ENCODE measurements at regions of chr11 and their contacts with region 1.

Region 1: GRCh38 chr11:72793425-72794367 is at the start of gene STARD10:
- DNase-seq: peak; percentile 79
- ATAC-seq: peak; percentile 98
- H3K4me3 ChIP-seq: peak within 1 kb of the TSS; percentile 66
- H3K27ac ChIP-seq: peak within 1 kb of the TSS; percentile 77
- H3K4me1 ChIP-seq: peaks cover 11% of the 10 kb centered on the region
- H3K27me3 ChIP-seq: no peaks in the 10 kb centered on the region
- CTCF ChIP-seq: peak; percentile 84 to 95 (median 95)
- EP300 ChIP-seq: no peak
- POLR2A ChIP-seq: peak; percentile 81
- RAD21 ChIP-seq: peak; percentile 58
- polyA plus RNA-seq, gene STARD10: 0.15 to 0.21 TPM

Region 2: DNA sequence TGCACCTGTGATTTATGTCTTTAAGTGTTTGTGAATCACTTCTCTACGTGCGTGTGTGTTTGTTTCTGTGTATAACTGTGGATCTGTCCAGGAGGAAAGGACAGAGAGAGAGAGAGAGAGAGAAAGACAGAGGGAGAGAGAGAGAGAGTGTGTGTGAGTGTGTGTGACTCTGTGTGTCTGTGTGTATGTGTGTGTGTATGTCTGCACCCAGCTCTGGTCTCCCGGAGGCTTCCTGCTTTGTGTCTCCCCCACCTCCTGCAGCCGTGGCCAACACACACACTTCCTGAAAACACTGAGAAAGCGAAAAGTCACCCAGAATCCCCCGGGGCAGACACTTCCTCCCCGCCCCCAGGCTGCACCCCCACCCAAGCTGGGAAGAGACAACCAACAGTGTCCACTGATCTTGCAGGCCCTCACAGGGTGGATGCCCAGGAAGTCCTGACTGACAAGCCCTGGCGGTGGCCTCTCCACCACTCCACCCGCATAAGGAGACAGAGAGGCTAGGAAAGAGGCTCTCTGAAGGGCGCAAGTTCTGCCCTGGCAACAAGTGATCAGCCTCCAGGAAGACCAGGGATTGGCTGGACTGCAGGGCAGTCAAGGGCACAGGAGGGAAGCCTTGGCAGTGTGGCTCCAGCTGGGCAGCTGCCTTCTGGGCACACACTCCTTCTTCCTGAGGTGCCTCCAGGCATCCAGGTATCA is 71.5 kb before region 1 on chr11:
- CTCF ChIA-PET with region 1: interaction called, 469 read pairs
- POLR2A ChIA-PET with region 1: interaction called, 12 read pairs
- RAD21 ChIA-PET with region 1: interaction called, 256 read pairs
- SMC1A ChIA-PET with region 1: interaction called, 185 read pairs
- in situ Hi-C with region 1: loop called (anchors 10 kb)
- intact Hi-C with region 1: loop called (anchors 1 kb)
- DNase-seq: no peak
- ATAC-seq: peak; percentile 93
- H3K4me3 ChIP-seq: peak overlapping the region; percentile 85
- H3K27ac ChIP-seq: peak overlapping the region; percentile 92
- H3K4me1 ChIP-seq: peaks cover 49% of the 10 kb centered on the region
- H3K27me3 ChIP-seq: no peaks in the 10 kb centered on the region
- CTCF ChIP-seq: no peak
- EP300 ChIP-seq: no peak
- POLR2A ChIP-seq: peak; percentile 72
- RAD21 ChIP-seq: no peak

Region 3: DNA sequence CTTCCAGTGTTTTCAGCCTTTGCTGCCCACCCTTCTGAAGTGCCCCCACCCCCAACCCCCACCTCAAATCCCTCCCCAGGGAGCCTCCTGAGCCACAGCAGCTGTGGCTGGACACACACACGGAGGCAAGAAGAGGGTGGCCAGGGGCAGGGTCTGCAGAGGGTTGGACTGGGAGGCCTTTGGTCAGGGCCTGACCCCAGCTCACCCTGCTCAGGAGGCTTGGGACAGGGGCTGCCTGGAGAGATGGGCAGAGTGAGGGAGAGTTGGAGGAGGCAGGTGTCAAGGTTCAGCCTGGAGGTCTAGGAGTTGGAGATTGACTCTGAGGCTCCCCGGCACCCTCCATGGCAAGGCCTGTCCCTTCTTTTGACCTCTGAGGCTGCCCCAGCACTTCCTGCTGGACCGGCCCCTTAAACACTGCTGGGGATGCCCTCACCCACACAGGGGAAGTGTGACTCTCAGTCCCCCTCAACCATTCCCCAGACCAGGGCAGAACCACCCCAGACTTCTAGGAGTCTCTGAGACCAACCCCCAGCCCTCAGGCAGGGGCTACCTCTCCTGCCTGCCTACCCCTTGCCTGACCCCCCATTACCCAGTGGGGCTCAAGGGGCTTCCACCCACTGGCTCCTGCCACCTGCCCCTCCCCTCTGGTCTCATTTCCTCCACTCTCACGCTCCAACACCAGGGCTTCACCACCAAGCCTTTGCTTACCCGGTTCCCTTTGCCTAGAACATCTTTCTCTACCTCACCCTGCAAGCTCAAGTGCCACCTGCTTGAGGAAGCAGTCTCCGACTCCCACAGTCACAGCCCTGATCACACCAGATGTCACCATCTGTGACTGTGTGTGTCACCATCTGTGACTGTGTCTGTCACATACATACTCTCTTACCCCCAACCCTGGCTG is 50.1 kb before region 1 on chr11:
- CTCF ChIA-PET with region 1: interaction called, 65 read pairs
- POLR2A ChIA-PET with region 1: interaction called, 40 read pairs
- RAD21 ChIA-PET with region 1: interaction called, 55 read pairs
- SMC1A ChIA-PET with region 1: interaction called, 38 read pairs
- in situ Hi-C with region 1: no loop called
- intact Hi-C with region 1: loop called (anchors 5 kb)
- DNase-seq: no peak
- ATAC-seq: peak; percentile 53
- H3K4me3 ChIP-seq: peak overlapping the region; percentile 51; the same call in 1 of the 2 replicates
- H3K27ac ChIP-seq: peak overlapping the region; percentile 59
- H3K4me1 ChIP-seq: peaks cover 75% of the 10 kb centered on the region
- H3K27me3 ChIP-seq: no peaks in the 10 kb centered on the region
- CTCF ChIP-seq: no peak
- EP300 ChIP-seq: no peak
- POLR2A ChIP-seq: no peak
- RAD21 ChIP-seq: no peak

Region 4: DNA sequence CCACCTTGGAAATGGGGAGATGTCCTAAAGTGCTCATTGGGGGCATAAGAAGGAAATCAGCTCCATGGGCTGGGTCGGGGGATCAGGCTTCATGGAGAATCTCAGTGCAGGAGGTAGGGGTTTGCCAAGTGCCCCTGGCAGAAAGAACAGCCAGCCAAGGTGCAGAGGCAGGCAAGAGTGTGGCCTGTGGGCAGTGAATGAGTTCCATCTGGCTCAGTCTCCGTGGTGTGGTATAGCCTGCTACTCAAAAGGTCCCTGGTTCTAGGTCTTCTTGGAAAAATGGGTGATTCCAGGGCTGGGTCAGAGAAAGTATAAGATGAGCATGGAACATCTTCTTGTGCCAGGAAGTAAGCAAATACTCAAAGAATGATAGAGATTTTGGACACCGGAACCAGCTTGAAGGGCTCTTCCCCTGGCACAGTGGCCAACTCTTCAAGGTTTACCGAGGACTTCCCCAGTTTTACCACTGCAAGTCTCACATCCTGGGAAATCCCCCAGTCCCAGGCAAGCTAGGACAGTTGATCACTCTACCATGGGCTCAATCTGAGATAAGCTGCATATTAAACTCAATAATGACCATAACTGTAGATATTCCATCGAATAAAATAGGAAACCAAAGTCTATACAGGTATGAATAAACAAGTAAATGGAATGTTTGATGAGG is 30.9 kb before region 1 on chr11:
- CTCF ChIA-PET with region 1: interaction called, 18 read pairs
- POLR2A ChIA-PET with region 1: interaction called, 5 read pairs
- RAD21 ChIA-PET with region 1: interaction called, 7 read pairs
- SMC1A ChIA-PET with region 1: interaction called, 7 read pairs
- in situ Hi-C with region 1: no loop called
- intact Hi-C with region 1: no loop called
- DNase-seq: no peak
- ATAC-seq: peak; percentile 98
- H3K4me3 ChIP-seq: no peak overlapping the region
- H3K27ac ChIP-seq: peak overlapping the region; percentile 64
- H3K4me1 ChIP-seq: peaks cover 25% of the 10 kb centered on the region
- H3K27me3 ChIP-seq: no peaks in the 10 kb centered on the region
- CTCF ChIP-seq: no peak
- EP300 ChIP-seq: no peak
- POLR2A ChIP-seq: no peak
- RAD21 ChIP-seq: no peak

Region 5: DNA sequence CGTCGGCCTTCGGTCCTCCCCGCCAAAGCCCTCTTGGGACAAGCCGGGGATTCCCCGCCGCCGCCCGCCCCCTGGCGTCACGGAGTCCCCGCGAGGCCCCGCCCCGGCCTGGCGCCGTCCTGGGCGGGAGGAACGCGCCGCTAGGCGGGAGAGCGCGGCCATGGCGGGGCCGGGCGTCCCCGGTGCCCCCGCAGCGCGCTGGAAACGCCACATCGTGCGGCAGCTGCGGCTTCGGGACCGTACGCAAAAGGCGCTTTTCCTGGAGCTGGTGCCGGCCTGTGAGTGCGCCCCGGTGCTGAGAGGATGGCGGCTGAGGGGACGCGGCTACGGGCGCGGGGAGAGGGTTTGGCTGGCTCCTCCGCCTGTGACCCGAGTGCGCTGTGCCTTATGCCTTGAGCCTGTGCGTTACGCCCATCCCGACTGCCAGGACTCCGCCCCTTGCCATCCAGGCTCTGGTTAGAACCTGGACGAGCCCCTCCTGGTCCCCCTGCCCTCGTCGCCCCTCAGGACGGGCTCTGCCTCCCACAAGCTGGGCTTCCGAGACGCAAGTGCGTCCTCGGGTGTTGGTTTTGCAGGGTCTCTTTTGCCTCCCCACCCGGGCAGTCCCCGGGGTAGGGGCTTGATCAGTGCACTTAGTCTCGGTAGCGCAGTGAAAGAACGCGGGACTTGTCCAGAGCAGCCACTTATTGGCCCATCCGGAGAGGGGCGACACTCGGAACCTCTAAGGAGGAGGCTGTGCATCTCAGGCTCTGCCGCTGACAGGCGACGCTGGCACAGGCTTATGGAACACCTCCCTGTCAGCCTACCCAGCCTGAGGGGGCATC is 20.8 kb after region 1 on chr11 and contains the start of gene ATG16L2:
- CTCF ChIA-PET with region 1: interaction called, 81 read pairs
- POLR2A ChIA-PET with region 1: interaction called, 46 read pairs
- RAD21 ChIA-PET with region 1: interaction called, 45 read pairs
- SMC1A ChIA-PET with region 1: interaction called, 11 read pairs
- in situ Hi-C with region 1: no loop called
- intact Hi-C with region 1: loop called (anchors 1 kb)
- DNase-seq: no peak
- ATAC-seq: peak; percentile 74
- H3K4me3 ChIP-seq: peak within 1 kb of the TSS; percentile 89
- H3K27ac ChIP-seq: peak within 1 kb of the TSS; percentile 98
- H3K4me1 ChIP-seq: peaks cover 7% of the 10 kb centered on the region; the same call in 1 of the 2 replicates
- H3K27me3 ChIP-seq: no peaks in the 10 kb centered on the region
- CTCF ChIP-seq: peak in 2 of 3 experiments; percentile 15 to 19; a peak in 1 of 6 replicates
- EP300 ChIP-seq: 0 out of 4 replicates have a peak, but pooled peaks of 1 of the 2 experiments have one; percentile 3
- POLR2A ChIP-seq: peak; percentile 81
- RAD21 ChIP-seq: 0 out of 2 replicates have a peak, but pooled peaks have one; percentile 20
- polyA plus RNA-seq, gene ATG16L2: 1.9 to 5.3 TPM

Region 6: GRCh38 chr11:72897506-72897905 is 103.8 kb after region 1 on chr11:
- CTCF ChIA-PET with region 1: no interaction called
- POLR2A ChIA-PET with region 1: no interaction called
- RAD21 ChIA-PET with region 1: no interaction called
- SMC1A ChIA-PET with region 1: no interaction called
- in situ Hi-C with region 1: no loop called
- intact Hi-C with region 1: no loop called
- DNase-seq: no peak
- ATAC-seq: no peak
- H3K4me3 ChIP-seq: no peak overlapping the region
- H3K27ac ChIP-seq: no peak overlapping the region
- H3K4me1 ChIP-seq: no peaks in the 10 kb centered on the region
- H3K27me3 ChIP-seq: no peaks in the 10 kb centered on the region
- CTCF ChIP-seq: no peak
- EP300 ChIP-seq: no peak
- POLR2A ChIP-seq: no peak
- RAD21 ChIP-seq: no peak